ENCODE measurements at regions of chr4 and their contacts with region 1.

Region 1: DNA sequence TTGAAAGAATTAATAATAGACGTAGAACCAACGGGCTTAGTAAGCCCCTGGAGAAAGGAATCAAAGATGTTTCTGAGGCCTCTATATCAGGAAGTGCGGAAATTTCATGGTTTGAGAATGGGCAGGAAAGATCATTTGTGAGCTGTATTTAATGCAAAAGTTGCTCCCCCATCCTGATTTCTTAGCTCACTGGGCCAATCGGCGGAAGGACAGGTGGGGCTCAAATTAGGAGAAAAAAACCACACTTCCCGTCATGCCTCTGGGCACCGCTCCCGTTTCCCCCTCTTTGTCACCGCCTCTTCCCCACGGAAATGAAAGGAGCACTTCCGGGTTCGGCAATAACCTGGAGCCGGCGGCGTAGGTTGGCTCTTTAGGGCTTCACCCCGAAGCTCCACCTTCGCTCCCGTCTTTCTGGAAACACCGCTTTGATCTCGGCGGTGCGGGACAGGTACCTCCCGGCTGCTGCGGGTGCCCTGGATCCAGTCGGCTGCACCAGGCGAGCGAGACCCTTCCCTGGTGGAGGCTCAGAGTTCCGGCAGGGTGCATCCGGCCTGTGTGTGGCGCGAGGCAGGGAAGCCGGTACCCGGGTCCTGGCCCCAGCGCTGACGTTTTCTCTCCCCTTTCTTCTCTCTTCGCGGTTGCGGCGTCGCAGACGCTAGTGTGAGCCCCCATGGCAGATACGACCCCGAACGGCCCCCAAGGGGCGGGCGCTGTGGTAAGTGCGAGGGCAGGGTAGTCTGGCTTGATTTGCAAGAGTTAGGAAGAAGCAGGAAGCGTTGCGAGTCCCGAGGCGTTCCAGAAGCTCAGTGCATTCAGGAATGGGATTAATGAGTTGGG is at the start of gene TMEM33:
- DNase-seq: peak; percentile 69
- H3K4me3 Mint-ChIP-seq: peak within 1 kb of the TSS; percentile 99
- H3K27ac Mint-ChIP-seq: peak within 1 kb of the TSS; percentile 93
- H3K4me1 Mint-ChIP-seq: peaks cover 59% of the 10 kb centered on the region
- H3K27me3 Mint-ChIP-seq: no peaks in the 10 kb centered on the region
- total RNA-seq, gene TMEM33: 97.8 and 106 TPM in 2 replicates

Region 2: GRCh38 chr4:41853973-41854372 is 81.1 kb before region 1 on chr4:
- intact Hi-C with region 1: no loop called
- DNase-seq: no peak
- H3K4me3 Mint-ChIP-seq: no peak overlapping the region
- H3K27ac Mint-ChIP-seq: no peak overlapping the region
- H3K4me1 Mint-ChIP-seq: no peaks in the 10 kb centered on the region
- H3K27me3 Mint-ChIP-seq: peaks cover 15% of the 10 kb centered on the region

Region 3: GRCh38 chr4:41990365-41991111 is 55.5 kb after region 1 on chr4 and contains the start of gene SLC30A9:
- intact Hi-C with region 1: loop called (anchors 1 kb)
- DNase-seq: peak; percentile 91
- H3K4me3 Mint-ChIP-seq: peak within 1 kb of the TSS; percentile 99
- H3K27ac Mint-ChIP-seq: peak within 1 kb of the TSS; percentile 92
- H3K4me1 Mint-ChIP-seq: peaks cover 28% of the 10 kb centered on the region
- H3K27me3 Mint-ChIP-seq: no peaks in the 10 kb centered on the region
- total RNA-seq, gene SLC30A9: 40.4 and 43.2 TPM in 2 replicates

Measured in activated T-helper 1 cell treated with anti-CD3 and anti-CD28 coated beads, Interleukin-12 subunit alpha, Interleukin-12 subunit beta, Interleukin-2, Interleukin-4 antibody, amounts not matched to agents 30 ng/mL and 10 ng/mL and 1 ng/mL, durations not matched to agents 14 hours and 24 hours and 36 hours (primary cell).